Activated CD4-positive, alpha-beta T cell treated with anti-CD3 and anti-CD28 coated beads for 36 hours (primary cell): ENCODE measurements at regions of chr1 and their contacts with region 1.

Region 1: DNA sequence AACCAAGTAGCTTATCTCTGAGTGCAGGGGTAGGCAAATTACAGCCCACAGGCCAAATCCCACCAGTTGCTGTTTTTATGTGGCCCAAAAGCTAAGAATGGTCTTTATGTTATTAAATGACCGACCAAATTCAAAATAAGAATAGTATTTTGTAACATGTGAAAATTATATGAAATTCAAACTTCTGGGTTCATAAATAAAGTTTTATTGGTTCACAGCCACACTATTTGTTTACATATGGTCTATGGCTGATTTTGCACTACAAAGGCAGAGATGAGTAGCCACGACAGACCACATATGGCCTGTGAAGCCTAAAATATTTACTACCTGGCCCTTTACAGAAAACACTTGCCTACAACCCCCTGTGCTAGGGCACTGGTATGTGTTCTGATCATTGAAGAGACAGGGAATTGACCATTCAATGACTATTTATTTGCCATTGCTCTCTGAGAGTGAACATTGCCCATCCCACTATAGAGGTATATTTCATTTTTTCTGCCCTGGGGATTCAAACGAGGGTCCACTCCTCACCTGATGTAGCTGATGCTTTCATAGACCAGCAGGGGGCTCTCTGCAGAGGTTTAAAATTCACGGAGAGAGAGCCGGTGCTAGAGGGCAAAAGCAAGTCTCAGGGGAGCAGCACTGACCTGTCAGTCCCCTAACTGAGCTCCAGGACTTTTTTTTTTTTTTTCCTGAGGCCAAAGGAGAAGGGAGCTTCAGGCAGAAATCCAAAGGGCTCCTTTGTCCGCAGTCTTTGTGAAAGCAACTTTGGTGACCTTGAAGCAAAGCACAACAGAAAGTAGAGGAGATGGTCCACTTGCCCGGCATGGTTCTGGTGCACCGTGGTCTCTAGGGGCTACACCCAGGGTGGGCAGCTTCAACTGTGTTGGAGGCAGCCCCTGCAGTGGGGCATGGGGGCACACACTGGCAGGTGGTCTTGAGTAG is 7.3 kb upstream of the GNL2 start:
- DNase-seq: peak; percentile 55
- ATAC-seq: peak; percentile 83
- H3K4me3 Mint-ChIP-seq: no peak overlapping the region
- H3K27ac Mint-ChIP-seq: no peak overlapping the region
- H3K4me1 Mint-ChIP-seq: peaks cover 4% of the 10 kb centered on the region
- H3K27me3 Mint-ChIP-seq: no peaks in the 10 kb centered on the region

Region 2: DNA sequence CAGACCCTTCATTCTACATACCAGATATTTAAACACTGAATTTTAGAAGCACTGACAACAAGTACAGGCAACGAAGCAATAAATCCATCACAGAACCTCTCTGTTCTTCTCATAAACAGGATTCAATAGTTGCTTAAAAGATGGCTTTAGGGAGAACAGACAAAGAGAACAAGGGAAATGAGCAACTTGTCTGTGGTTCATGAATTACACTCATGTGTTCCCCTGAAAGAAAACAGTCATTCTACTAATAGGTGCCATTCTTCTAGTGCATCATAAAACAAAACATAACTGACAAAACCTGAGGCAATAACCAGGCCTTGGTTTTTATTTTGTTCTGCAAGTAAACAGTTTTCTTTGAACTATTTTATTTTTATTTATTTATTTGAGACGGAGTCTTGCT is 14.1 kb before region 1 on chr1:
- CTCF ChIA-PET with region 1: interaction called, 15 read pairs
- POLR2A ChIA-PET with region 1: no interaction called
- intact Hi-C with region 1: no loop called
- DNase-seq: no peak
- ATAC-seq: peak; percentile 81
- H3K4me3 Mint-ChIP-seq: no peak overlapping the region
- H3K27ac Mint-ChIP-seq: peak overlapping the region; percentile 47
- H3K4me1 Mint-ChIP-seq: peaks cover 43% of the 10 kb centered on the region
- H3K27me3 Mint-ChIP-seq: no peaks in the 10 kb centered on the region

Region 3: DNA sequence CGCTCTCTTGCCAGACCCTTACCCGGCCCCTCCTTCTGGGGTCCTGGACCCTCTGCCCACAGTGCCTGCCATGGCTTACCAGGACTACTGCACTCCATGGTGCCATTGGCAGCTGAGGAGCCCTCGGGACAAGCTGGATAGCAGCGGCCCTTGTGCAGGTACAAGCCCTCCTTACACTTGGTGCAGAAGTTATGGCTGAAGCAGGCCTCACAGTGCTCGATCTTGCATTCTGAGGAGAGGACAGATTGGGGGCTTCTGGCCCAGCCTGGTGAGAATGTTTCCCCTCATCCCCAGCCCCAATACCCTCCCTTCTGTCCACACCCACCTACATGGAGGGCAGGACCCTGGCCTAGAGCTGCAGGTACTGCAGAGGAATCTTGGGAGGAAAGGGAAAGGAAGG is 11.1 kb after region 1 on chr1:
- CTCF ChIA-PET with region 1: interaction called, 10 read pairs
- POLR2A ChIA-PET with region 1: no interaction called
- intact Hi-C with region 1: no loop called
- DNase-seq: no peak
- ATAC-seq: no peak
- H3K4me3 Mint-ChIP-seq: no peak overlapping the region
- H3K27ac Mint-ChIP-seq: no peak overlapping the region
- H3K4me1 Mint-ChIP-seq: no peaks in the 10 kb centered on the region
- H3K27me3 Mint-ChIP-seq: peaks cover 24% of the 10 kb centered on the region

Region 4: GRCh38 chr1:37682334-37682987 is 79.4 kb after region 1 on chr1:
- CTCF ChIA-PET with region 1: interaction called, 142 read pairs
- POLR2A ChIA-PET with region 1: interaction called, 5 read pairs
- intact Hi-C with region 1: loop called (anchors 1 kb)
- DNase-seq: peak; percentile 87
- ATAC-seq: peak; percentile 89
- H3K4me3 Mint-ChIP-seq: no peak overlapping the region
- H3K27ac Mint-ChIP-seq: peak overlapping the region; percentile 60
- H3K4me1 Mint-ChIP-seq: peaks cover 3% of the 10 kb centered on the region
- H3K27me3 Mint-ChIP-seq: no peaks in the 10 kb centered on the region